ENCODE measurements at regions of chr6 and their contacts with region 1.

Region 1: DNA sequence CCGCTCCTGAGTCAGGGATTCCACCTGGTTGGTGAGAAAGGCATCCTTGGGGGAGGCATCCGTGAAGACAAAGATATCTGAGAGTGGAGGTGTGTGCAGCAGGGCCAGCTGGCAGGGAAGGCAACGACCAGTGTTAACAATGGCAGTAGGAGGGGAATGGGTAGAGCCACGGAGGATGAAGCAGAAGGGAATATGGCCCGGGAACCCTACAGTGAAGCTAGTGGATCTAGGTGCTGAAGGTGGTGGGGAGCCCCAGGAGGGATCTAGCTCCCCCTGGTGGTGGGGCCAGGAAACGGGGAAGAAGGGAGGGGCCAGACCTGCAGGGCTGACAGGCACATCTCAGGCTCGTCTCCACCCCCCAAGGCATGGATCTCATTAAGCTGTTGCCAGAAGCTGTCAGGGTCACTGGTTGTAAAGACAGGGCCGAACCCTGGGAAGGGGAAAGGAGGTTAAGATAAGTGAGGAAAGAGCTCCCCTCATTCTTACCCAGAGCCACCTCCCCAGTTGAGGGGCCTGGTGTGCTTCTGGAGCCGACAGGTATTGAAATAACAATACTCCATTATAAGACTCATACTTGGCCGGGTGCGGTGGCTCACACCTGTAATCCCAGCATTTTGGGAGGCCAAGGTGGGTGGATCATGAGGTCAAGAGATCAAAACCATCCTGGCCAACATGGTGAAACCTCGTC is 7.3 kb downstream of the VWA7 start:
- DNase-seq: peak; percentile 84 to 89
- H3K4me3 ChIP-seq: no peak overlapping the region
- H3K27ac ChIP-seq: no peak overlapping the region
- H3K4me1 ChIP-seq: peaks cover 5 to 27% (median 13%) of the 10 kb centered on the region in 4 donors
- H3K27me3 ChIP-seq: peaks cover 0 to 7% (median 0%) of the 10 kb centered on the region in 3 donors
- CTCF ChIP-seq: peak in 5 of 7 experiments; percentile 68 to 90 (median 87)
- EP300 ChIP-seq: no peak
- POLR2A ChIP-seq: no peak

Region 2: DNA sequence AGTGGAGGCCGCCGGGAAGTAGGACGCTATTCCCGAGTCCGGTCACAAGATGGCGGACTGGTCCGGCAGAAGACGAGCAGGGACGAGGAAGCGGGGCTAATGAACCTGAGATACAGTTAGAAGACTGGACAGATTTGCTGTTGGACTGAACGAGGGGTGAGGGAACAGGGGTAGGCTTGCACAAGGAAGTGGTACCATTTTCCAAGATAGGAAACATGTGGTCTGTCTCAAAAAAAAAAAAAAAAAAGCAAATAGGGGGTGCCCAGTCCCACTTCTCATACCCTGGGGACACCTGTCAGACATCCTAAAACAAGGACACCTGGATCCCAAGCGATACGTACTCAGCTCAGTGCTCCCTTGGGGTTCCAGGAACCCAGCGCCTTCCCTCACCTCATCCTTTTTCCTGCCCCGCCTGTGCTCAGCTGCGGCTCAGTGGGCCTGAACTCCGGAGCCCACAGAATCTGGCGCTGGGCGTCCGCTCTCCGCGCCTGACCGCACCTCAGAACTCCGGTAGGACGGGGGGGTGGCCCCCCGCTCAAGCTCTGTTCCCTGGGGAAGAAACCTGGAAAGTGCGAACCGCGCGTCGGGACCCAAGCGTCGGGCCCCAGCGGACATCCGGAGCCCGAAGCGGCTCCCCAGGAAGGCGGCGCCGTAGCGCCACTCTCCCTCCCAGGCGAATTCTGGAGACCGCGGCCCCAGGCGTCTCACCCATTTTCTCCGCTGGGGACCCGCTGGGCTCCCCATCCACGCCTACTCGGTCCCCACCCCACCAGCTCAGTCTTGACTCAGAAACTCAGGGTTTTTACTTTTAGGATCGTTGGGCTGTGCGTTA is 88.8 kb before region 1 on chr6 and contains the start of gene LY6G5C:
- intact Hi-C with region 1: loop called (anchors 10 kb)
- DNase-seq: peak; percentile 87 to 95
- H3K4me3 ChIP-seq: peak within 1 kb of the TSS; percentile 53 to 55 (median 54)
- H3K27ac ChIP-seq: peak within 1 kb of the TSS; percentile 61 to 85 (median 79)
- H3K4me1 ChIP-seq: peaks cover 11 to 39% (median 28%) of the 10 kb centered on the region in 4 donors
- H3K27me3 ChIP-seq: no peaks in the 10 kb centered on the region
- CTCF ChIP-seq: peak in 5 of 7 experiments; percentile 41 to 84 (median 61)
- EP300 ChIP-seq: no peak
- POLR2A ChIP-seq: no peak
- total RNA-seq, gene LY6G5C: not detected

Measured in stomach (tissue), 19 donors.